ENCODE measurements at regions of chr17 and their contacts with region 1.

Region 1: DNA sequence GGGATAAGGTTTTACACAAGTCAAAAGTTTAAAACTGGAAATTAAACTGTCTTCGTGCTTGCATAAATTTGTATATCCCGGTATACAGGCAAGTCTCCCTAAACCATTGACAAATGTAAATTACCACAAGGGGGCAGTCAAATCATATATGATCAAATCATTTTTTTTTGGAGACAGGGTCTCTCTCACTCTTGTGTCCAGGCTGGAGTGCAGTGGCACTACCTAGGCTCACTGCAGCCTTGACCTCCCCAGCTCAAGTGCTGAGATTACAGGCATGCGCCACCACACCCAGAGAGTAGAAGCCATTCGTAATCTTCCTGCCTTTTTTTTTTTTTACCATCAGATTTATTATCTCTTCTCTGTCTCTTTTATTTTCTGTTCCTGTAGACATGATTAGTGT is 18.5 kb downstream of the TOP2A start:
- DNase-seq: peak; percentile 67 to 78
- ATAC-seq: peak; percentile 86 to 91; a peak in 5 of 6 replicates
- H3K4me3 ChIP-seq: no peak overlapping the region
- H3K27ac ChIP-seq: peak overlapping the region; percentile 27 to 44; a peak in 3 of 6 replicates
- H3K4me1 ChIP-seq: peaks cover 10% of the 10 kb centered on the region; the same call in 1 of the 3 replicates
- CTCF ChIP-seq: peak; percentile 85
- EP300 ChIP-seq: no peak
- POLR2A ChIP-seq: no peak
- RAD21 ChIP-seq: peak; percentile 50 to 72

Region 2: DNA sequence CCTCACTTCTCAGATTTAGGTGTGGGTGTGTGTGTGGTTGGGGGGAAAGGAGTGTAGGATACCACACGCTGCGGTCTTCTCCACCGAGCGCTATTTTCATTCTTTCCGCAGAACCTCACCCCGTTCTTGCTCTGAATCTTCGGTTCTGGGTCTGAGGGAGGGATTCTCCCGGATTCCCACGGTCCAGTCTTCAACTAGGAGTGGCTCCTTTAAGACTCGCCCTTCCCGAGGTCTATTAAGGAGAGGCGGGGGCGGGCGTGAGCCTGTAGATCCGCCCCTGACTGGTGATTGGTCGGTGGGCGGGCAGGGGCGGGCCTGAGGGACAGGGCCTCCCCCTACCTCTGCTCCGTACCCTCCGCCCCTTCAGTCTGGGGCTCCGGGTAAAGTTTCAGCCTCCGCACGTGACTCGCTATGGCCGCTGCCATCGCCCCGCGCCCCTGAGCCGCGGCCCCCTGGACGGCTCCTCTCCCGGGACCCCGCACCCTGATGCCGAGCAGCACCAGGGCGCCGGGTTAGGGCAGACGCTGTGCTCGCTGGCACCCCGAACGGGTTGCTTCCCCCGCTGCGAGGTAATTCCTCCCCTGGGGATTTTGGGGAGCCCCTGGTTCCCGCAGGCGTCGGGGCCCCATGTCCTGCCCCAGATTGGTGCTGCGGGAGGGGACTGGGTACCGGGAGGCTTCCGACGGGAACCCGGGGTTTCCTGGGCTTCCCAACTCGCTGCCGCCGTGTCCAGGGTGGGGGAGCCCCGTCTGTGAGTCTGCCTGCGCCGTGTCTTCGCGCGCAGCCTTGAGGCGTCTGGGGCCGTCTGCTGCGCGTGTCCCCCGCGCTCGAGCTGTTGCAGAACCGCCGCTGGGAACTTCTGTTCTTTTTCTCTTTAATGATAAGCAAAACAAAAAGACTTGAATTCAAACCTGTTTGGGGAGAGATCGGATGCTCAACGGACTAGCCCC is 81.0 kb before region 1 on chr17:
- CTCF ChIA-PET with region 1: no interaction called
- POLR2A ChIA-PET with region 1: no interaction called
- DNase-seq: peak; percentile 98 to 99
- ATAC-seq: peak; percentile 69 to 87
- H3K4me3 ChIP-seq: peak overlapping the region; percentile 81
- H3K27ac ChIP-seq: peak overlapping the region; percentile 95 to 97
- H3K4me1 ChIP-seq: peaks cover 86% of the 10 kb centered on the region
- CTCF ChIP-seq: no peak
- EP300 ChIP-seq: no peak
- POLR2A ChIP-seq: peak; percentile 9
- RAD21 ChIP-seq: no peak

Region 3: DNA sequence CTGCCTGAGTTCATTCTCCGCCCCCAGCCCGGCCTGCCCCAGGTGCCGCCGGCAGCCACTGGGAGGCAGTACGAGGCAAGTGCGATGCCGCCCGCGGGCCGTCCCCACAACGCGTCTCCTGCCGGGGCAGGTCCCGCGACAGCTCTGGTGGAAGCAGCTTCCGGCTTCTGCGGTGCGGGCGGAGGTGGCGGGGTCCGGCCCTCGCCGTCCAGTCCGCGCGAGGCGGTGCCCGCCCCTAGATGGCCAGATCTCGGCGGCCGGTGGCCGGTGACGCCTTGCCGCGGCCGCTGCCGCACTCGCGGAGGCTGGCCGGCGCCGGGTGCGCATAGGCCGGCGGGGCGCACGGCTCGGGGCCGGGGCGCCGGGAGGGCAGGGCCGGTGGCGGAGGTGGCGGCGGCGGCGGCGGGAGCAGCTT is 36.5 kb before region 1 on chr17:
- CTCF ChIA-PET with region 1: interaction called, 15 read pairs
- POLR2A ChIA-PET with region 1: no interaction called
- DNase-seq: peak; percentile 93 to 97
- ATAC-seq: peak; percentile 83 to 86
- H3K4me3 ChIP-seq: peak overlapping the region; percentile 61
- H3K27ac ChIP-seq: peak overlapping the region; percentile 84 to 95
- H3K4me1 ChIP-seq: peaks cover 30% of the 10 kb centered on the region
- CTCF ChIP-seq: peak; percentile 85
- EP300 ChIP-seq: no peak
- POLR2A ChIP-seq: peak; percentile 74
- RAD21 ChIP-seq: peak; percentile 73 to 85

Region 4: DNA sequence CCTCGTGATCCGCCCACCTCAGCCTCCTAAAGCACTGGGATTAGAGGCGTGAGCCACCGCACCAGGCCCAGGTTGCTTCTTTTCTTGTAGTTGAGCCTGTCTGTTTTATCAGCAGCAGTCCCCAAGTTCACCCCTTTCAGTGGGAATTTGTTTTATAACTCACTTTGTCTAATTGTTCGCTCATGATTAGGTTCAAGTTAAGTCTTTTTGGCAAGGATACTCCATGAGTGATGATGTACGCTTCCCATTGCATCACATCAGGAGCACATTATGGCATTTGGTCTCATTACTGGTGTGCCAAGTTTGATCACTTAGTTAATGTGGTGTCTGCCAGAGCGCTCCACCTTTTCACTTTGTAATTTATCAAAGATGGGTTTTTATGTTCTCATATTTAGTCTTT is 20.2 kb before region 1 on chr17:
- CTCF ChIA-PET with region 1: interaction called, 18 read pairs
- POLR2A ChIA-PET with region 1: no interaction called
- DNase-seq: no peak
- ATAC-seq: no peak
- H3K4me3 ChIP-seq: no peak overlapping the region
- H3K27ac ChIP-seq: no peak overlapping the region
- H3K4me1 ChIP-seq: no peaks in the 10 kb centered on the region
- CTCF ChIP-seq: no peak
- EP300 ChIP-seq: no peak
- POLR2A ChIP-seq: no peak
- RAD21 ChIP-seq: no peak

Region 5: DNA sequence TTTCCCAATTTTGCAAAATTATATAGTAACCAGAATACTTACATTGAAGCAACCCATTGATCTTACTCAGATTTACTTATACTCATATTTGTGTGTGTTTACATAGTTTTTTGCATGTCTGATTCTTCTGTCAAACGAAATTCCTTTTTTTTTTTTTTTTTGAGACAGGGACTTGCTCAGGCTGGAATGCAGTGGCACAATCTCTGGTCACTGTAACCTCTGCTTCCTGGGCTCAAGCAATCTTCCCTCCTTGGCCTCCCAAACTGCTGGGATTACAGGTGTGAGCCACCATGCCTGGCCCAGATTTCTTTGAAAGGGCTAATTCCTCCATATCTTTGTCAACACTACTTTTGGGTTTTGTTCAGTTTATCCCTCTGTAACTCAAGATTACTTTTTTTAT is 11.5 kb before region 1 on chr17:
- CTCF ChIA-PET with region 1: interaction called, 18 read pairs
- POLR2A ChIA-PET with region 1: no interaction called
- DNase-seq: no peak
- ATAC-seq: no peak
- H3K4me3 ChIP-seq: no peak overlapping the region
- H3K27ac ChIP-seq: no peak overlapping the region
- H3K4me1 ChIP-seq: no peaks in the 10 kb centered on the region
- CTCF ChIP-seq: no peak
- EP300 ChIP-seq: no peak
- POLR2A ChIP-seq: no peak
- RAD21 ChIP-seq: no peak

Region 6: DNA sequence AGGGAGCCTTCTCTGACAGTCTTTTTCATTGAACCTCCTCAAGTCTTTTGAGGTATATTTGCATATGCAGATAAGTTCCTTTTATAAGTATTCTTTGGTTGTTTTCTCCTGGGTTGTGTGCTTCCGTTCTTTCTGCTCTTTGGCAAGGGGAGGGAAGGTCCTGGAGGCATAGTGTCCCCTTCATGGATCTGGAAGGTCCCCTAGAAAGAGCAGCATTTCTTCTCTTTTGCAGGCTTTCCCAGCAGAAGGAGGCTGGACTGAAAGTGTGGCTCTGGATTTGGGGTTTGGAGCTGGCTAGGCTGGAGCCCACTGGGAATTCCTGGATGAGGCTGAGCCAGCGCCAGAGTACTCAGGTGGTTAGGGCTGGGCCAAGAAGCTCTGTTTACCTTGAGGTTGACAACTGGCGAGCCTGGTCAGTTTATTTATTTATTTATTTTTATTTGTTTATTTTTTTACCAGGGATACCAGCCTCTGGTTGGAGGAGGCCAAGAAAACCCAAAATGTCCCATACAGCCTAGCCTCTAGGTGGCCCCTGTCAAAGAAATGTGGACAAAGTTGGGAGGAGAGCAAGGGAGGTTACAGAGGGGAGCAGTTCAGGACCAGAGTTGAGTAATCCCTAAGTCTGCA is 23.9 kb after region 1 on chr17:
- CTCF ChIA-PET with region 1: interaction called, 18 read pairs
- POLR2A ChIA-PET with region 1: no interaction called
- DNase-seq: peak; percentile 64 to 65
- ATAC-seq: peak; percentile 66 to 82; a peak in 5 of 6 replicates
- H3K4me3 ChIP-seq: no peak overlapping the region
- H3K27ac ChIP-seq: peak overlapping the region in 1 of 2 experiments; percentile 17; a peak in 1 of 6 replicates
- H3K4me1 ChIP-seq: peaks cover 25% of the 10 kb centered on the region
- CTCF ChIP-seq: peak; percentile 41
- EP300 ChIP-seq: no peak
- POLR2A ChIP-seq: no peak
- RAD21 ChIP-seq: no peak; a peak in 1 of 5 replicates

Region 7: DNA sequence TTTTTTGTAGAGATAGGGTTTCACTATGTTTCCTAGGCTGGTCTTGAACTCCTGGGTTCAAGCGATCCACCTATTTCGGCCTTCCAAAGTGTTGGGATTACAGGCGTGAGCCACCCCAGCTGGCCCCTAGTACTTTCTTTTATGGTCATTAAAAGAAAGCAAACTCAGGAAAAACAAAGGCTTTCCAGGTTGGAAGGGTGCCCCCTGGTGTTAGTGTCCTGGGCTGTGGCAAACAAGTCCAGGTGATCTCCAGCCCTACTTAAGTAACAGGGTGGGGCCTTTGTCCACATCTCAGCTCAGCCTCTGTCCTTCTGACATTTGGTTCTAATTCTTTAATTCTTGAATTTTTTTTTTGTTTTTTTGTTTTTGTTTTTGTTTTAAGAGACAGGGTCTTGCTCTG is 51.0 kb after region 1 on chr17:
- CTCF ChIA-PET with region 1: interaction called, 17 read pairs
- POLR2A ChIA-PET with region 1: no interaction called
- DNase-seq: peak; percentile 81 to 87
- ATAC-seq: peak; percentile 18 to 22; a peak in 3 of 6 replicates
- H3K4me3 ChIP-seq: peak overlapping the region; percentile 78
- H3K27ac ChIP-seq: peak overlapping the region; percentile 98
- H3K4me1 ChIP-seq: peaks cover 82% of the 10 kb centered on the region
- CTCF ChIP-seq: peak; percentile 76
- EP300 ChIP-seq: no peak
- POLR2A ChIP-seq: no peak
- RAD21 ChIP-seq: peak; percentile 47 to 54; a peak in 3 of 5 replicates

Measured in A549 (cell line).